ENCODE measurements at regions of chr4 and their contacts with region 1.

Region 1: DNA sequence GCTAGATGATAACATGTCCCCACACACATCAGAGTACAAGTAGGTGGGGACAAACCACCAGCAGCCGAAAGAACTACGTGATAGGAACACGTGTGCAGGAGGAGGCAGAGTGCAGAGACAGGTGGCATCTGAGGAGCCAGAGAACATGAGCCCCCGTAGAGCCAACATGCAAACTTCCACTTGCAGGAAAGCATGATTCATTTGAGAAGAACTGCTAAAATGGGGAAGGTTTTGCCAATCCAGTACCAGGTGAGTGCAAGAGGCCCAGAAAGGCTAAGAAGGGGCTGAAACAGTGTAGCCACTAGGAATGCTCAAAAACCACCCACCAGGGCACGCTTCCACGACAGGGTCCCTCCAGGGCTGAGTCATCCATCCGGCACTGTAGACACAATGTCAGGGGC is 149.8 kb upstream of the TENM3 start:
- DNase-seq: no peak
- ATAC-seq: no peak
- H3K4me3 ChIP-seq: no peak overlapping the region
- H3K27ac ChIP-seq: no peak overlapping the region
- H3K4me1 ChIP-seq: no peaks in the 10 kb centered on the region
- H3K27me3 ChIP-seq: no peaks in the 10 kb centered on the region
- CTCF ChIP-seq: no peak
- EP300 ChIP-seq: no peak
- POLR2A ChIP-seq: no peak
- RAD21 ChIP-seq: no peak

Region 2: GRCh38 chr4:181761156-181761555 is 332.3 kb before region 1 on chr4:
- CTCF ChIA-PET with region 1: no interaction called
- POLR2A ChIA-PET with region 1: no interaction called
- in situ Hi-C with region 1: no loop called
- intact Hi-C with region 1: loop called (anchors 10 kb)
- DNase-seq: no peak
- ATAC-seq: no peak
- H3K4me3 ChIP-seq: no peak overlapping the region
- H3K27ac ChIP-seq: no peak overlapping the region
- H3K4me1 ChIP-seq: 0 out of 2 replicates have a peak, but pooled peaks cover 4% of the 10 kb centered on the region
- H3K27me3 ChIP-seq: peaks cover 0 to 2% of the 10 kb centered on the region in 2 experiments; a peak in 1 of 5 replicates
- CTCF ChIP-seq: no peak
- EP300 ChIP-seq: no peak
- POLR2A ChIP-seq: no peak
- RAD21 ChIP-seq: no peak

Region 3: DNA sequence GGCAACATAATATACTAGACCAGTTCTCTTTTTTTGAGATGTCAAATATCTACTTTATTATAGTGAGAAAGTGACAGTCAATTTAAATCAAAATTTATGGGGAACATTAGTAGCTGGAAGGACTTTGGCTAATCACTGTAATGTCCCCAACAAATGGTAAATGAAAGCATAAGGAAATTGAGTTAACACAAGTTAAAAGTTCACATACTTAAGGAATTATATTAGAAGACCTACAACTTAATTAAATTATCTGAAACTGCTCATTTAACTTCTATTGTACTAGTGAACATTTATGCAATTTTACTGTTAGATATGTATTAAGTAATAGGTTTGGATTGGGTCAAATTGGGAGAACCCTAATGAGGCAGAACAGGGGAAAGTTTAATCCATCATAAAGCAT is 10.5 kb before region 1 on chr4:
- CTCF ChIA-PET with region 1: no interaction called
- POLR2A ChIA-PET with region 1: no interaction called
- in situ Hi-C with region 1: no loop called
- intact Hi-C with region 1: no loop called
- DNase-seq: no peak
- ATAC-seq: no peak
- H3K4me3 ChIP-seq: no peak overlapping the region
- H3K27ac ChIP-seq: no peak overlapping the region
- H3K4me1 ChIP-seq: no peaks in the 10 kb centered on the region
- H3K27me3 ChIP-seq: peaks cover 0 to 5% of the 10 kb centered on the region in 2 experiments; a peak in 1 of 5 replicates
- CTCF ChIP-seq: no peak
- EP300 ChIP-seq: no peak
- POLR2A ChIP-seq: no peak
- RAD21 ChIP-seq: no peak

Region 4: GRCh38 chr4:182478475-182478874 is 385.0 kb after region 1 on chr4:
- CTCF ChIA-PET with region 1: no interaction called
- POLR2A ChIA-PET with region 1: no interaction called
- in situ Hi-C with region 1: no loop called
- intact Hi-C with region 1: no loop called
- DNase-seq: peak; percentile 29
- ATAC-seq: peak; percentile 64
- H3K4me3 ChIP-seq: no peak overlapping the region
- H3K27ac ChIP-seq: no peak overlapping the region
- H3K4me1 ChIP-seq: no peaks in the 10 kb centered on the region
- H3K27me3 ChIP-seq: no peaks in the 10 kb centered on the region
- CTCF ChIP-seq: peak; percentile 38; the same call in 1 of the 2 replicates
- EP300 ChIP-seq: no peak
- POLR2A ChIP-seq: no peak
- RAD21 ChIP-seq: no peak